A673 (cell line): ENCODE measurements at regions of chr17 and their contacts with region 1.

Region 1: GRCh38 chr17:14525551-14526455 is 224.9 kb downstream of the HS3ST3B1 start:
- DNase-seq: no peak
- H3K4me3 ChIP-seq: no peak overlapping the region
- H3K27ac ChIP-seq: no peak overlapping the region
- H3K4me1 ChIP-seq: no peaks in the 10 kb centered on the region
- H3K27me3 ChIP-seq: no peaks in the 10 kb centered on the region
- CTCF ChIP-seq: no peak

Region 2: GRCh38 chr17:14505606-14506005 is 20.2 kb before region 1 on chr17:
- CTCF ChIA-PET with region 1: no interaction called
- POLR2A ChIA-PET with region 1: no interaction called
- intact Hi-C with region 1: loop called (anchors 2 kb)
- DNase-seq: no peak
- H3K4me3 ChIP-seq: no peak overlapping the region
- H3K27ac ChIP-seq: no peak overlapping the region
- H3K4me1 ChIP-seq: no peaks in the 10 kb centered on the region
- H3K27me3 ChIP-seq: no peaks in the 10 kb centered on the region
- CTCF ChIP-seq: no peak

Region 3: DNA sequence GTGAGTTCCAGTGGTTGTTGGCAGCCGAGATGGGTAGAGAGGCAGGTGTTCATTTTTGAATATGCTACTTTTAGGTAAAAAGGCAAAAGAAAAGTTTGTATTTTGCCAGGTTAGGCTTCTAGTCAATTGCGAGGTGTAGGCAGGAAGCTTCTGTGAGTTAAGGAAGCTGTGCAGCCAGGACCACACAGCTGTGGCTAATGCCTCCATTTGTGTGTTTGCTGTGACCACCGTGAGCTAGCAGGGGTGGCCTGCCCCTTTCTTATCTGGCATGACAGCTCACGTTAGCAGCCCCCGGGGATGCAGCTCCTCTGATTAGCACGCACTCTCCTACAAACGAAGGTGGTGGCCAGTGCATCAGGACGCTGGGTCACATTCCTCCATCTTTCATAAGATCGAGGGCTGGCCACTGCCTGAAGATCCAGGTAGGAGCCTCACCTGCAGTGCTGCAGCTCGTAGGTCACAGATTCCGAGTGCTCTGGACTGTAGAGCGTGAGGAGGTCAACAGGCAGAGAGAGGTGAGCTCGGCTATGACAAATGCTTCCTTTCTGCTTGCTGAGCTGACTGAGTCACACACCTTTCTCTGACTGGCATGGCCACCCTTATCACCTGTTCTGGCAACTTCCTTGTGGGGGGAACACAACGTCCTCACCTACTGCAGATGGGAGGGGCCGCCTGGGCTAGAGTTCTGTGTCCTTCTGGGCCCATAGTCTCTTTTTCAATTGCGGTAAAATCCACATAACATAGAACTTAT is 19.5 kb after region 1 on chr17:
- CTCF ChIA-PET with region 1: no interaction called
- POLR2A ChIA-PET with region 1: no interaction called
- intact Hi-C with region 1: no loop called
- DNase-seq: no peak
- H3K4me3 ChIP-seq: no peak overlapping the region
- H3K27ac ChIP-seq: no peak overlapping the region
- H3K4me1 ChIP-seq: no peaks in the 10 kb centered on the region
- H3K27me3 ChIP-seq: no peaks in the 10 kb centered on the region
- CTCF ChIP-seq: no peak

Region 4: GRCh38 chr17:15307710-15308111 is 781.9 kb after region 1 on chr17:
- CTCF ChIA-PET with region 1: no interaction called
- POLR2A ChIA-PET with region 1: no interaction called
- intact Hi-C with region 1: no loop called
- DNase-seq: no peak
- H3K4me3 ChIP-seq: no peak overlapping the region
- H3K27ac ChIP-seq: no peak overlapping the region
- H3K4me1 ChIP-seq: no peaks in the 10 kb centered on the region
- H3K27me3 ChIP-seq: peaks cover 17% of the 10 kb centered on the region
- CTCF ChIP-seq: no peak